ENCODE measurements at regions of chr14 and their contacts with region 1.

Region 1: GRCh38 chr14:65102441-65103149 is at the start of gene MAX:
- DNase-seq: peak; percentile 96 to 100 (median 98)
- ATAC-seq: peak; percentile 89
- H3K4me3 ChIP-seq: peak within 1 kb of the TSS; percentile 98
- H3K4me3 Mint-ChIP-seq: peak within 1 kb of the TSS; percentile 91
- H3K27ac ChIP-seq: peak within 1 kb of the TSS; percentile 98 to 100
- H3K27ac Mint-ChIP-seq: peak within 1 kb of the TSS; percentile 90
- H3K4me1 ChIP-seq: peaks cover 21% of the 10 kb centered on the region
- H3K4me1 Mint-ChIP-seq: peaks cover 44% of the 10 kb centered on the region
- H3K27me3 ChIP-seq: no peaks in the 10 kb centered on the region
- H3K27me3 Mint-ChIP-seq: peaks cover 4% of the 10 kb centered on the region
- CTCF ChIP-seq: no peak
- total RNA-seq, gene MAX: 159 to 171 TPM

Region 2: GRCh38 chr14:64387694-64388532 is 714.7 kb before region 1 on chr14 and contains the start of gene MTHFD1:
- CTCF ChIA-PET with region 1: no interaction called
- POLR2A ChIA-PET with region 1: no interaction called
- intact Hi-C with region 1: loop called in 1 of 2 experiments (anchors 5 kb)
- DNase-seq: peak; percentile 89 to 99 (median 96)
- ATAC-seq: peak; percentile 88
- H3K4me3 ChIP-seq: peak within 1 kb of the TSS; percentile 83
- H3K4me3 Mint-ChIP-seq: peak within 1 kb of the TSS; percentile 94
- H3K27ac ChIP-seq: peak within 1 kb of the TSS; percentile 43 to 55
- H3K27ac Mint-ChIP-seq: peak within 1 kb of the TSS; percentile 85
- H3K4me1 ChIP-seq: peaks cover 27% of the 10 kb centered on the region
- H3K4me1 Mint-ChIP-seq: peaks cover 33% of the 10 kb centered on the region
- H3K27me3 ChIP-seq: no peaks in the 10 kb centered on the region
- H3K27me3 Mint-ChIP-seq: no peaks in the 10 kb centered on the region
- CTCF ChIP-seq: no peak
- total RNA-seq, gene MTHFD1: 13.3 to 18.9 TPM

Region 3: DNA sequence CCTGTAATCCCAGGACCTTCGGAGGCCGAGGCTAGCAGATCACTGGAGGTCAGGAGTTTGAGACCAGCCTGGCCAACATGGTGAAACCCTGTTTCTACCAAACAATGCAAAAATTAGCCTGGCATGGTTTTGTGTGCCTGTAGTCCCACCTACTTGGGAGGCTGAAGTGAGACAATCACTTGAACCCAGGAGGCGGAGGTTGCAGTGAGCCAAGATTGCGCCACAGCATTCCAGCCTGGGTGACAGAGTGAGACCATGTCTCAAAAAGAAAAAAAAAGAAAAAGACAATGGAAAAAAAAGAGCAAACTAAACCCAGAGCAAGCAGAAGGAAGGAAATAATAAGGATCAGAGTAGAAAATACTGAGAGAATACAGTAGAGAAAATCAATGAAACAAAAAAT is 183.0 kb before region 1 on chr14:
- CTCF ChIA-PET with region 1: no interaction called
- POLR2A ChIA-PET with region 1: interaction called, 7 read pairs
- intact Hi-C with region 1: loop called in 1 of 2 experiments (anchors 5 kb)
- DNase-seq: no peak
- ATAC-seq: no peak
- H3K4me3 ChIP-seq: no peak overlapping the region
- H3K4me3 Mint-ChIP-seq: no peak overlapping the region
- H3K27ac ChIP-seq: no peak overlapping the region
- H3K27ac Mint-ChIP-seq: peak overlapping the region; percentile 70
- H3K4me1 ChIP-seq: peaks cover 32% of the 10 kb centered on the region
- H3K4me1 Mint-ChIP-seq: peaks cover 90% of the 10 kb centered on the region
- H3K27me3 ChIP-seq: no peaks in the 10 kb centered on the region
- H3K27me3 Mint-ChIP-seq: no peaks in the 10 kb centered on the region
- CTCF ChIP-seq: no peak

Region 4: DNA sequence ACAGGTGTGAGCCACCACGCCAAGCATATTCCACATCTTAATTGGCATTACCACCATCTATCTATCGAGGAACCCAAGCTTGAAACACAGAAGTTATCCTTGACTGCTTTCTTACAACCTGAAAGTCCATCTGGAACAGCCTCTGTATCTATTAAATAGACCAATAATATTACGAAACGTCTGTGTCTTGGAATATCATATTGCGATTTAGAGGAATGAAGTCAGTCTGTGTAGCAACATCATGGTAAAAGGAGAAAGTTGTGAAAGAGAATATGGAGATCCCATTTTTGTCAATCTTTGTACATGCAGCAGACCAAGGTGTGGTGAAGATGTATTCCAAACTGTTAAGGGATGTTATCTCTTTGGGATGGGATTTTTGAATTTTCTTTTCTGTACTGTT is 25.5 kb after region 1 on chr14:
- CTCF ChIA-PET with region 1: no interaction called
- POLR2A ChIA-PET with region 1: no interaction called
- intact Hi-C with region 1: no loop called
- DNase-seq: no peak
- ATAC-seq: no peak
- H3K4me3 ChIP-seq: no peak overlapping the region
- H3K4me3 Mint-ChIP-seq: no peak overlapping the region
- H3K27ac ChIP-seq: no peak overlapping the region
- H3K27ac Mint-ChIP-seq: no peak overlapping the region
- H3K4me1 ChIP-seq: no peaks in the 10 kb centered on the region
- H3K4me1 Mint-ChIP-seq: no peaks in the 10 kb centered on the region
- H3K27me3 ChIP-seq: peaks cover 0 to 7% of the 10 kb centered on the region in 2 experiments
- H3K27me3 Mint-ChIP-seq: peaks cover 5% of the 10 kb centered on the region
- CTCF ChIP-seq: no peak